Activated CD4-positive, alpha-beta T cell treated with anti-CD3 and anti-CD28 coated beads for 36 hours (primary cell): ENCODE measurements at regions of chr1 and their contacts with region 1.

Region 1: GRCh38 chr1:229227298-229227919 is 43.5 kb upstream of the RAB4A start:
- DNase-seq: peak; percentile 89
- ATAC-seq: peak; percentile 82
- H3K4me3 Mint-ChIP-seq: no peak overlapping the region
- H3K27ac Mint-ChIP-seq: no peak overlapping the region
- H3K4me1 Mint-ChIP-seq: peaks cover 21% of the 10 kb centered on the region
- H3K27me3 Mint-ChIP-seq: no peaks in the 10 kb centered on the region

Region 2: DNA sequence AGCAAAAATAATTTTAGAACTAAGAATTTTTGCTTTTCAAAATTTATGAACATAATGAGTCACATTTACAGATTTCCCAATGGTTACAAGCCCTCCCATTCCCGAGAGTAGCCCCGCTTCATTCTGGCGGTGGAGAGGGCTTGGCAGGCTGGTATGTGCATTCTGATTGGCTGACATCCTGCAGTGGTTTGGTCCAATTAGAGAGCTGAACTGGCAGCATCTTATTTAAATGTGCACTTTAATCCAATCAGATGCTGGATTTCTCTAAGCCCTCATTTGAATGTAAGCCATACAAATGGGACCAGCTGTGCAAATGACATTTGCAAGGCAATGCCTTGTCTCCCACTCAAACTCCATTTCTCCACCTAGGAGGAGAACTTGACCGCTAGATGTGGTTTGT is 792.7 kb before region 1 on chr1:
- CTCF ChIA-PET with region 1: no interaction called
- POLR2A ChIA-PET with region 1: no interaction called
- intact Hi-C with region 1: no loop called
- DNase-seq: no peak
- ATAC-seq: no peak
- H3K4me3 Mint-ChIP-seq: no peak overlapping the region
- H3K27ac Mint-ChIP-seq: no peak overlapping the region
- H3K4me1 Mint-ChIP-seq: no peaks in the 10 kb centered on the region
- H3K27me3 Mint-ChIP-seq: peaks cover 11% of the 10 kb centered on the region

Region 3: GRCh38 chr1:228691926-228692325 is 535.5 kb before region 1 on chr1:
- CTCF ChIA-PET with region 1: interaction called, 21 read pairs
- POLR2A ChIA-PET with region 1: no interaction called
- intact Hi-C with region 1: loop called (anchors 1 to 2 kb)
- DNase-seq: peak; percentile 30
- ATAC-seq: no peak
- H3K4me3 Mint-ChIP-seq: no peak overlapping the region
- H3K27ac Mint-ChIP-seq: no peak overlapping the region
- H3K4me1 Mint-ChIP-seq: peaks cover 10% of the 10 kb centered on the region
- H3K27me3 Mint-ChIP-seq: no peaks in the 10 kb centered on the region

Region 4: DNA sequence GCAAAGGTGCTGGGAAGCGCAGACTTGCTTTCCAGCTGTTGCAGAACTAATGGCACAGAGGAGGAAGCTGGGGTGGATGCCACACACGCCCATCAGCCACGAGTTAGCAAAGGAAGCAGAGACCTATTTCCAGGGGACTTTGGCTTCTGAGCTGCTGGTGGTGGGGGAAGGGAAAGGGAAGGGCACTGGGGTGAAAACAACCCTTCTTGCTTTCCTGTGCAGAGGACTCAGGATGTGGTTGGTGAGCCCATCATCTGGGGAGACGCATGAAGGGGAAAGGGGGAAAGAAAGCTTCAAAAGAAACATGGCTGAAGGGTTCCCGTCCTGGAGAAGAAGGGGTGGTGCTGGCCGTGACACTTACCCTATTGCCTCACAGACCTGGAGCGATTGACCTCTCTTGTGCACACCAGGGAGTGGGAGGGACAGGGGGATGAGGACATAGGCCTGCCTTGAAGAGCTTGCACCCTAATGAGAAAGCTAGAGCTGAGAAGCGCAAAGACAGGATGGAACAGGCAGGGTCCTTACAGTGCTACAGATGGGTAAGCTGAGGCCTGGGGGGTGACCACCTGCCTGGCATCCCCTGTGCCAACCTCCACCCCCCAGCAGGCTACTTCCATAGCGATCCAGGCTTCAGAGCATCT is 97.3 kb before region 1 on chr1:
- CTCF ChIA-PET with region 1: interaction called, 13 read pairs
- POLR2A ChIA-PET with region 1: no interaction called
- intact Hi-C with region 1: loop called (anchors 5 to 10 kb)
- DNase-seq: peak; percentile 21
- ATAC-seq: peak; percentile 28
- H3K4me3 Mint-ChIP-seq: no peak overlapping the region
- H3K27ac Mint-ChIP-seq: no peak overlapping the region
- H3K4me1 Mint-ChIP-seq: peaks cover 54% of the 10 kb centered on the region
- H3K27me3 Mint-ChIP-seq: no peaks in the 10 kb centered on the region

Region 5: DNA sequence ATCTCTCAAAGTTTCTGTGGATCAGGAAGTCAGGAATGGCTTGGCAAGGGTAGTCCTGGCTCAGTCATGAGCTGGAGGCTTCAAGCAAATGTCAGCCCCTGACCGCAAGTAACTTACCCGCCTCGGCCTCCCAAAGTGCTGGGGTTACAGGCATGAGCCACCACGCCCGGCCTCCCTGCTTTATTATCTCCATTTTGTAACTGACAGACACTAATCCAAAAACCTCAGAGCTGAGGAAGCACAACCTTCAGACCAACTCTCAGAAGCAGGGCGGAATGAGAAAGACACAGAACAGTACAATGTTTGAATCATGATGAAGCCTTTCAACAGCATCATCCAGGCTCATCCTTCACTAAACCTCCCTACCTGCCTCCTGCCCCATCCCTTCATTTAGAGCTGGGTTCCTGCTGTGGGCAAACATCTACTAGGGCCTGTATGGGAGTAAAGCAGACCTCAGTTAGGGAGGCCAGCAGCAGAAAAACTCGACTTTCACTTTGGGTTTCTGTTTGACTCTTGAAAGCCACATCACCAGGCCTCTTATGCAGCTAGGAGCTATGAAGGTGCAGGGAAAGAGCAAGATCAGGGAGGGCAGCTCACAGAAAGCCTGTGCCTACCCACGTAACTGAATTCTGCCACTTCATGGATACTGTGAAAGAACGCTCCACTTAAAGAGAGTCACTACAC is 40.9 kb before region 1 on chr1:
- CTCF ChIA-PET with region 1: interaction called, 10 read pairs
- POLR2A ChIA-PET with region 1: no interaction called
- intact Hi-C with region 1: no loop called
- DNase-seq: peak; percentile 55
- ATAC-seq: peak; percentile 98
- H3K4me3 Mint-ChIP-seq: no peak overlapping the region
- H3K27ac Mint-ChIP-seq: peak overlapping the region; percentile 75
- H3K4me1 Mint-ChIP-seq: peaks cover 11% of the 10 kb centered on the region
- H3K27me3 Mint-ChIP-seq: no peaks in the 10 kb centered on the region

Region 6: DNA sequence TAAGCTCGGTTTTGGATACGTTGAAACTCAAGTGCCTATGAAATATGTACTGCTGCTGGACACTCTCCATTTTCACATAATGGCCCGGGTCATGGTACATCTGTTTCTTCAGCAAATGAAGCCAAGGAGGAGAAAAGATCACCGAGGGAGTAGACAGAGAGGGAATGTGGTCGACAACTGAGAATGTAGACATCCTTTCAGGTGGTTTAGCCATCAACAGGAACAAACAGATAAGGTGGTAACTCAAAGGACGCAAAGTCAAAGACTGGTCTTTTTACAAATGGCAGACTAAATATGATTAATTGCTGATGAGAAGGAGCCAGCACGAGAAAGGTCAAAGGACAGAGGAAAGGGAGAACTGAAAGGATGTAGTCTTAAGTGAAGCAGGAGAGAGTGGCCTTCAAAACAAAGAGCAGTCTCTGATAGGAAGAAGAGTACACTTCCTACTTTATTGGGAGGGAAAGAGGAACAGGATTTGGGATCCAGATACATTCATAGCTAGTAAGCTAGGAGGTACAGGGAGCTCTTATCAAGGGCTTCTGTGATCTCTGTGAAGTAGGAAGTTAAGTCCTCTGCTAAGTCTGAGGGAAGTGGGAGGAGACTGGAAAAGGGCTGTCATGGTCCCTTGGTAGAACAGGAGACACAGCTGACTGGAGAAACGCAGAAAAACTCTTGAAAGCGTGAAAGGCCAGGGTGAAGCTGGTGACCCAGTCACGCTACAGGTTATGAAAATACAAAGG is 252.4 kb after region 1 on chr1:
- CTCF ChIA-PET with region 1: interaction called, 12 read pairs
- POLR2A ChIA-PET with region 1: no interaction called
- intact Hi-C with region 1: no loop called
- DNase-seq: no peak
- ATAC-seq: no peak
- H3K4me3 Mint-ChIP-seq: no peak overlapping the region
- H3K27ac Mint-ChIP-seq: no peak overlapping the region
- H3K4me1 Mint-ChIP-seq: peaks cover 3% of the 10 kb centered on the region
- H3K27me3 Mint-ChIP-seq: no peaks in the 10 kb centered on the region